Sigmoid colon (tissue), 7 donors: ENCODE measurements at regions of chr13 and their contacts with region 1.

Region 1: DNA sequence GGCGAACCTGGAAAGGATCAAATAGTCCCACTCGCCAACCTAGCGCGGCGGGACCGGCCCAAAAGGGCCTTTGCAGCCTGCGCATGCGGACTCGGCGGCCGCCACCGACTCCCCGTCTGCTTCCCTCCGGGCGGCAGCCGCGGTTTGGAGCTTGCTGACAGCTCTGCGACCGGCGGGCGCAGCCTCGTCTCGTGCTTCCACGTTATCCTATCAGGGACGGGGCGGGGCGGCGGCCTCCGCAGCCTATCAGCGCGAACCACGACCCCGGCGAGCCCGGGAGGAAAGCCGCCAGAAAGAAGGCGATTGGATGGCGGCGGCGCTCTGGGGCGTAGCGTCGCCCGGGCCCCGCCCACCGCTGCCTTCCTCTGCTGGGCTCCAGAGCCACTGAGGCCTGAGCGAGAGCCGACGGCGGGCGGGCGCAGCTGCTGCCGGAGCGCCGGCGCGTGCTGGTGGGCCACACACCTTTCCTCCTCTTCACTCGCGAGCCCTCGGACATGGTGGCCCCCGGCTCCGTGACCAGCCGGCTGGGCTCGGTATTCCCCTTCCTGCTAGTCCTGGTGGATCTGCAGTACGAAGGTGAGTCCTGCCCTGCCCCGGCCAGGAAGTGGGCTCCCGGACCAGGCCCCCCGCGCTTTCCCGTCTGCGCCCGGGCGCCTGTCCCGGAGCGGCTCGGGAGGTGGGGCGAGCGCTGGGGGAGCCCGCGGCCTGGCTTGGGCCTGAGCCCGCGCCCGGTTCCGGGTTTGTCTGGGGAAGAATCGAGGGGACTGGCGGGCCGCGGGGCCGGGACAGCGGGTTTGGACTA is at the start of gene DNAJC3:
- DNase-seq: peak; percentile 100
- H3K4me3 ChIP-seq: peak within 1 kb of the TSS; percentile 77 to 91 (median 88)
- H3K27ac ChIP-seq: peak within 1 kb of the TSS; percentile 97 to 98 (median 98)
- H3K4me1 ChIP-seq: peaks cover 0 to 50% (median 36%) of the 10 kb centered on the region in 4 donors
- H3K27me3 ChIP-seq: no peaks in the 10 kb centered on the region
- CTCF ChIP-seq: no peak
- EP300 ChIP-seq: peak in 1 of 4 donors; percentile 45
- POLR2A ChIP-seq: peak; percentile 77 to 90
- total RNA-seq, gene DNAJC3: 41.5 to 48.5 (median 43.4) TPM

Region 2: GRCh38 chr13:95387733-95388207 is 289.2 kb before region 1 on chr13:
- intact Hi-C with region 1: loop called (anchors 5 kb)
- DNase-seq: peak; percentile 85
- H3K4me3 ChIP-seq: no peak overlapping the region
- H3K27ac ChIP-seq: peak overlapping the region in 3 of 4 donors; percentile 49 to 73 (median 67)
- H3K4me1 ChIP-seq: peaks cover 0 to 37% (median 23%) of the 10 kb centered on the region in 4 donors
- H3K27me3 ChIP-seq: no peaks in the 10 kb centered on the region
- CTCF ChIP-seq: no peak
- EP300 ChIP-seq: peak in 2 of 4 donors; percentile 38 to 47
- POLR2A ChIP-seq: no peak

Region 3: GRCh38 chr13:95588721-95589120 is 88.2 kb before region 1 on chr13:
- intact Hi-C with region 1: no loop called
- DNase-seq: no peak
- H3K4me3 ChIP-seq: no peak overlapping the region
- H3K27ac ChIP-seq: no peak overlapping the region
- H3K4me1 ChIP-seq: no peaks in the 10 kb centered on the region
- H3K27me3 ChIP-seq: no peaks in the 10 kb centered on the region
- CTCF ChIP-seq: no peak
- EP300 ChIP-seq: no peak
- POLR2A ChIP-seq: no peak

Region 4: GRCh38 chr13:95642028-95642621 is 34.8 kb before region 1 on chr13:
- intact Hi-C with region 1: loop called (anchors 1 kb)
- DNase-seq: peak; percentile 77
- H3K4me3 ChIP-seq: peak overlapping the region; percentile 35 to 80 (median 55)
- H3K27ac ChIP-seq: peak overlapping the region; percentile 32 to 64 (median 54)
- H3K4me1 ChIP-seq: peaks cover 0 to 38% (median 23%) of the 10 kb centered on the region in 4 donors
- H3K27me3 ChIP-seq: peaks cover 0 to 4% (median 3%) of the 10 kb centered on the region in 3 donors
- CTCF ChIP-seq: no peak
- EP300 ChIP-seq: no peak
- POLR2A ChIP-seq: no peak

Region 5: GRCh38 chr13:95763601-95764000 is 86.6 kb after region 1 on chr13:
- intact Hi-C with region 1: no loop called
- DNase-seq: no peak
- H3K4me3 ChIP-seq: no peak overlapping the region
- H3K27ac ChIP-seq: no peak overlapping the region
- H3K4me1 ChIP-seq: no peaks in the 10 kb centered on the region
- H3K27me3 ChIP-seq: no peaks in the 10 kb centered on the region
- CTCF ChIP-seq: no peak
- EP300 ChIP-seq: no peak
- POLR2A ChIP-seq: no peak